BJ (cell line): ENCODE measurements at regions of chr1 and their contacts with region 1.

Region 1: DNA sequence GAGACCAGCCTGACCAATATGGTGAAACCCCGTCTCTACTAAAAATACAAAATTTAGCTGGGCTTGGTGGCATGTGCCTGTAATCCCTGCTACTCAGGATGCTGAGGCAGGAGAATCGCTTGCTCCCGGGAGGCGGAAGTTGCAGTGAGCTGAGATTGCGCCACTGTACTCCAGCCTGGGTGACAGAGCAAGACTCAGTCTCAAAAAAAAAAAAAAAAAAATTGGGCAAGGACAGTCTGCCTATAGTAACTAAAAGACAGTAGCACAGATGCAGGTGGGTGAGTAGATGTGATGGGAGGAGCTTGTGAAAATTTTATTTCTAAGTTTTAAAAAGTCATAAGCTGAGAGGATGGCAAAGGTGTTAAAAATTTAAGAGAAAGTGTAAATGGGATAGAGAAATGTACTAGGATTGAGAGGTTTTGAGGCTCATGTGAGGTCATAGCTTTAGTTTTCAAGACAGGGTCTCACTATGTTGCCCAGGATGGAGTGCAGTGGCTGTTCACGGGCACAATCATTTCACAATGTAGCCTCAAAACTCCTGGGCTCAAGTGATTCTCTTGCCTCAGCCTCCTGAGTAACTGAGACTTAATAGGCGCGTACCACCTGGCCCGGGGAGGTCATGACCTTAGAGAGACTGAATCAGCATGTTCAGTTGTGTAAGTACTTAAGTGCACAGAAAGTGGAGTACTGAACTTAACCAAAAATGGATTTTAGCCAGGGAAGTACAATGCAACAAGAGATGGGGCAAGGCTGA is 33.7 kb downstream of the PTP4A2 start:
- DNase-seq: no peak
- H3K4me3 ChIP-seq: no peak overlapping the region
- H3K27me3 ChIP-seq: no peaks in the 10 kb centered on the region
- CTCF ChIP-seq: no peak

Region 2: GRCh38 chr1:31860581-31860980 is 43.9 kb before region 1 on chr1:
- CTCF ChIA-PET with region 1: no interaction called
- POLR2A ChIA-PET with region 1: interaction called, 20 read pairs
- DNase-seq: no peak
- H3K4me3 ChIP-seq: no peak overlapping the region
- H3K27me3 ChIP-seq: no peaks in the 10 kb centered on the region; the same call in 1 of the 2 replicates
- CTCF ChIP-seq: no peak